Activated B cell treated with CpG ODN at 0.5 μM for 24 hours (primary cell): ENCODE measurements at regions of chr11 and their contacts with region 1.

Region 1: DNA sequence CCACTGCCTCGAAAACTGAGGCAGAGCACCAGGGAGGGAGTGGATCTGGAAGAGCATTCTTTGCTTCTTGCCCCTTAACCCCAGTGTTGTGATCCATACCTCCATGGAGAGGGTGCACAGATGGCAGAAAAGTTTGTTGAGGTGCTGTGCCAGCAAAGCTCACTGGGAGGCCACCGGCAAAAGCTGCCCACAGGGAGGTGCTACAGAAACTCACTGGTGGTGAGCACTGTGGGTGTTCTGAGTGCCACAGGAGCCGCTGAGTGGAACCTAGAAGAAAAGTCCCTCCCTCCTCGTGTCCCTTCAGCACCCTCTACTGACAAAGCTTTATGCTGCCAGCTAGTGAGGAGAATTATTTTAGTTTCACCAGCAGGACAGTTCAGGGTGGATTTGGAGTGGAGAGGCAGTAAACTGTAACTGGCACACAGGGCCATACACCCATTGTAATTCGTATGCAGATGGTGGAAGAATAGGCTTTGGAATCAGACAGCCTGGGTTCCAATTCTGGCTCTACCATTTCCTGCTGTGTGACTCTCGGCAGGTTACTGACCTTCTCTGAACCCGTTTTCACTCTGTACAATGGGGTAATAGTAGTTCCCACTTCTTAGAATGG is 84.6 kb downstream of the SWAP70 start:
- DNase-seq: peak; percentile 46
- ATAC-seq: peak; percentile 83
- H3K4me3 Mint-ChIP-seq: peak overlapping the region; percentile 53
- H3K27ac Mint-ChIP-seq: peak overlapping the region; percentile 77
- H3K4me1 Mint-ChIP-seq: peaks cover 65% of the 10 kb centered on the region
- H3K27me3 Mint-ChIP-seq: no peaks in the 10 kb centered on the region
- CTCF ChIP-seq: peak; percentile 76

Region 2: DNA sequence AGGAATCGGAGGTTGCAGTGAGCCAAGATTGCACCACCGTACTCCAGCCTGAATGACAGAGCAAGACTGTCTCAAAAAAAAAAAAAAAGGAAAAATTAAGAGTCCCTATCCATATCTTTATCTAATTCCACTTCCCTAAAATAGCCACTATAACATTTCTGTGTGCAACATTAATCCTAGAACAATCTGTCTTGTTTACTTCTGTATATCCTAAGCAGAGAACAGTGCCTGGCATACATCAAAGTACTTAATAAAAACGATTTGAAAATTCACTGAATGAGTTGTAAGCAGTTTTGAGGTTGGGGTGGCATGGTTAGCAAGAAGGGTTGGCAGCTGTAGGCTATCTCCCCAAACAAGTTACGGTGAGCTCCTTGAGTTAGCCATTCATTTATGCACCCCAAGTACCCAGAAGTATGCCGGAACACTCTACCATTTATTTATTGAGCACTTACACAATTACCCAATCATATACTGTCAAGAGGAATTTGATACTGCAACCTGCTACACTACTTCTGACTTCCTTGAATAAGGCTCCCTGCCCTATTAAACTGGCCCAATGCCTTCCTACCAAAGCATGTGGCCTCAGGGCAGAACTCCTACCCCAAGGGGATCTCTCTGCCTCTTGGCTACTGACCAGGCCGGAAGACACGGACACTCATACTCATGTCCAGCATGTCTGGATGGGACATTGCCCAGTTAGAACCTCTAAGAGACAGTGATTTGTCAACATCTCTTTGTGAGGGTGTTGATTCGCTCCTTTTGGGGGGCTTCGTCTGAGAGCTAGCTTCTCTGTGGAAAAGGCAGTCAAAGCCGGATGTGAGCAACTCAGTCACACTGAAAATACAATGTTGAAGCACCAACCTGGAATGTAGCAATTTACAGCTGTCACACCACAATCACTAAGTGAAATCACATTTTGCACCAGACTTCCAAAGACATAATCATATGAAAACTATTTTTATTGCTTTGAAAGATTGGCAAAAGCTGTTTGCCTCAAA is 417.8 kb before region 1 on chr11:
- CTCF ChIA-PET with region 1: no interaction called
- POLR2A ChIA-PET with region 1: no interaction called
- intact Hi-C with region 1: no loop called
- DNase-seq: no peak
- ATAC-seq: no peak
- H3K4me3 Mint-ChIP-seq: no peak overlapping the region
- H3K27ac Mint-ChIP-seq: no peak overlapping the region
- H3K4me1 Mint-ChIP-seq: no peaks in the 10 kb centered on the region
- H3K27me3 Mint-ChIP-seq: no peaks in the 10 kb centered on the region
- CTCF ChIP-seq: no peak

Region 3: GRCh38 chr11:9573052-9573774 is 175.3 kb before region 1 on chr11 and contains the start of gene WEE1:
- CTCF ChIA-PET with region 1: interaction called, 12 read pairs
- POLR2A ChIA-PET with region 1: interaction called, 10 read pairs
- intact Hi-C with region 1: loop called (anchors 1 kb)
- DNase-seq: peak; percentile 97
- ATAC-seq: peak; percentile 90
- H3K4me3 Mint-ChIP-seq: peak within 1 kb of the TSS; percentile 95
- H3K27ac Mint-ChIP-seq: peak within 1 kb of the TSS; percentile 85
- H3K4me1 Mint-ChIP-seq: peaks cover 69% of the 10 kb centered on the region
- H3K27me3 Mint-ChIP-seq: no peaks in the 10 kb centered on the region
- CTCF ChIP-seq: no peak
- total RNA-seq, gene WEE1: 29.4 and 33.7 TPM in 2 replicates

Region 4: GRCh38 chr11:9663699-9664275 is 84.7 kb before region 1 on chr11 and contains the start of gene SWAP70:
- CTCF ChIA-PET with region 1: interaction called, 8 read pairs
- POLR2A ChIA-PET with region 1: interaction called, 59 read pairs
- intact Hi-C with region 1: loop called (anchors 1 kb)
- DNase-seq: peak; percentile 97
- ATAC-seq: peak; percentile 83
- H3K4me3 Mint-ChIP-seq: peak within 1 kb of the TSS; percentile 96
- H3K27ac Mint-ChIP-seq: peak within 1 kb of the TSS; percentile 97
- H3K4me1 Mint-ChIP-seq: peaks cover 73% of the 10 kb centered on the region
- H3K27me3 Mint-ChIP-seq: no peaks in the 10 kb centered on the region
- CTCF ChIP-seq: no peak
- total RNA-seq, gene SWAP70: 277 and 288 TPM in 2 replicates

Region 5: GRCh38 chr11:9688716-9689511 is 59.6 kb before region 1 on chr11:
- CTCF ChIA-PET with region 1: interaction called, 21 read pairs
- POLR2A ChIA-PET with region 1: interaction called, 9 read pairs
- intact Hi-C with region 1: loop called (anchors 2 kb)
- DNase-seq: no peak
- ATAC-seq: peak; percentile 80
- H3K4me3 Mint-ChIP-seq: no peak overlapping the region
- H3K27ac Mint-ChIP-seq: no peak overlapping the region
- H3K4me1 Mint-ChIP-seq: peaks cover 52% of the 10 kb centered on the region
- H3K27me3 Mint-ChIP-seq: no peaks in the 10 kb centered on the region
- CTCF ChIP-seq: no peak

Region 6: DNA sequence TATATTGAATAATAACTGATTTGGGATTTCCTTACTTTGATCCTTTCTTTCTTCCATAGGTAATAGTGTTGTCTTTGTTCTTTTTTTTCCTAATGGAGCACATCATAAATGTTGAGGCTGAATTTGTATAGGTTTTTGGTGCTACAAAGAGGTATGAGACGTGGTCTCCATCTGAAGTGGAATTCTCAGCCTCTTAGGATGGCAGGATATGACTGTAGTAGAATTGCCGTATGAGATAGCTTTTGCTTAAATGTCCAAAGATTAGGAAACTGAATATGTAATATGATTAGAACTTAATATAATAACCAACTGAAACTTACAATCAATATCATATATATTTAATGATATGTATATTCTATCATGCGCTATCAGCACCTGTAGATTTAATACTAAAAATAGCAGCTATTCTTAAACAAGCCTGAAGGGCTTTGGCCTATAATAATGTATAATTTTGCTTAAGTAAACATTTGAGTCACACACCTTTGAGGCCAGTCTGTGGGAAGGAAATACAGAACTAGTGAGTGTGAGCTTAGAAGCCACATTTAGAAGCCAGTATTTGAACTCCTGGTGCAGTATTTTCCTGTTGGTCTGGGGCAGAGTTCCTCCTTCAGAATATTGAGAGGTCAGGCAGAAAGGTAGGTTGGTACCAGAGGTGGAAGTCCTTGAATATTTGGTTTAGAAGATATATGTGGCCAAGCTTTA is 22.0 kb before region 1 on chr11:
- CTCF ChIA-PET with region 1: interaction called, 25 read pairs
- POLR2A ChIA-PET with region 1: interaction called, 7 read pairs
- intact Hi-C with region 1: loop called (anchors 1 kb)
- DNase-seq: no peak
- ATAC-seq: peak; percentile 35
- H3K4me3 Mint-ChIP-seq: peak overlapping the region; percentile 47
- H3K27ac Mint-ChIP-seq: peak overlapping the region; percentile 84
- H3K4me1 Mint-ChIP-seq: peaks cover 82% of the 10 kb centered on the region
- H3K27me3 Mint-ChIP-seq: no peaks in the 10 kb centered on the region
- CTCF ChIP-seq: no peak

Region 7: DNA sequence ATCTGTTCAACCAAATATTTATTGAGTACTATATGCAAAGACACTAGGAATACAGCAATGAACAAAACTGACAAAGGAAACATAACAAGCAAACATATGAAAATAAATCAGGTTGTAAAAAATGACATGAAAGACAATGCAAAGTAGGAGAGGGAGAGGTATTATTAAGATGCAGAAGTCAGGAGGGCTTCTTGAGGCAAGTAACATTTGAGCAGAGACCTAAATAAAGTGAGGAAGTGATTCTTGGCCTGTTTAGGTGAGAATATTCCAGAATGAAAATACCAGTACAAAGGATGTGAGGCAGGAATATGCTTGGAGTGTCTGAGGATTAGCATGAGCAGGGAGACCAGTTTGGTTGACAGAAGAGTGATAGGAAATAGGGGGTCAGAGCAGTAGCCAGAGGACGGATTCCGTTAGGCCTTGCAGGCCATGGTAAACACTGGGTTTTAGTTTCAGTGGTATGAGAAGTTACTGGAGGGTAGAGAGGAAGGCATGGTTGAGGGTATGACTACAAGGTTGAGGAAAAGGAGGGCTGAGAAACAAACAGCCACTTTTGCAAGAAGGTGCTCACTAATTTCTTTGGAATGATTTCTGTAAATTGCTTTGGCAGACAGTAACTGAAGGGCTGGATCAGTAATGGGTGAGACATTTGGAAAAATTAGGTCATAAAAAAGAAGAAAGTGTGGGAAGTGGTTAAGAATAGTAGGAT is 107.3 kb after region 1 on chr11:
- CTCF ChIA-PET with region 1: no interaction called
- POLR2A ChIA-PET with region 1: no interaction called
- intact Hi-C with region 1: no loop called
- DNase-seq: no peak
- ATAC-seq: peak; percentile 89
- H3K4me3 Mint-ChIP-seq: no peak overlapping the region
- H3K27ac Mint-ChIP-seq: no peak overlapping the region
- H3K4me1 Mint-ChIP-seq: peaks cover 38% of the 10 kb centered on the region
- H3K27me3 Mint-ChIP-seq: no peaks in the 10 kb centered on the region
- CTCF ChIP-seq: no peak